ENCODE measurements at regions of chr4 and their contacts with region 1.

Region 1: GRCh38 chr4:111631215-111631999 is 513.8 kb upstream of the FAM241A start:
- DNase-seq: no peak
- H3K4me3 ChIP-seq: no peak overlapping the region
- H3K27me3 ChIP-seq: no peaks in the 10 kb centered on the region
- CTCF ChIP-seq: peak; percentile 56

Region 2: GRCh38 chr4:111136438-111136837 is 495.0 kb before region 1 on chr4:
- CTCF ChIA-PET with region 1: interaction called, 15 read pairs
- POLR2A ChIA-PET with region 1: no interaction called
- DNase-seq: no peak
- H3K4me3 ChIP-seq: no peak overlapping the region
- H3K27me3 ChIP-seq: no peaks in the 10 kb centered on the region
- CTCF ChIP-seq: peak; percentile 44

Region 3: GRCh38 chr4:111773858-111774257 is 142.5 kb after region 1 on chr4:
- CTCF ChIA-PET with region 1: no interaction called
- POLR2A ChIA-PET with region 1: no interaction called
- DNase-seq: no peak
- H3K4me3 ChIP-seq: no peak overlapping the region
- H3K27me3 ChIP-seq: no peaks in the 10 kb centered on the region
- CTCF ChIP-seq: no peak

Region 4: DNA sequence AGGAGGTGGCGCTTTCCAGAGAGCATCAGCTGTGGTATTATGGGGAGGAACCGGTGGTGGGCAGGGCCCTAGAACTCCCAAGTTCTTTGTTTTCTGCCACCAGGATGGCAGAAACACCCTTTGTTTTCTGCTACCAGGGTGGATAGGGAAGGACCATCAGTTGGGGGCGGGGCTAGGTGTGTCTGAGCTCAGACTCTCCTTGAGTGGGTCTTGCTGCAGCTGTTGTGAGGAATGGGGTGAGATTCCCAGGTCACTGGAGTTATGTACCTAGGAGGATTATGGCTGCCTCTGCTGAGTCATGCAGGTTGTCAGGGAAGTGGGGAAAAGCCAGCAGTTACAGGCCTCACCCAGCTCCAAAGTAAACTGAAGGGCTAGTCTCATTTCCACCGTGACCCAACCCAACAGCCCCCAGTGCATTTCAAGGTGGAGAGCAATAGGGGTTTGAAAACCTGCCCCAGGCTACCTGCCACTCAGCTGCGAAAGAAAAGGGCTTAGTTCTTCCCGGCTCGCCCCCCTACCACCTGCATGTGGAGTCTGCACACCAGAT is 346.1 kb after region 1 on chr4:
- CTCF ChIA-PET with region 1: no interaction called
- POLR2A ChIA-PET with region 1: no interaction called
- DNase-seq: no peak
- H3K4me3 ChIP-seq: no peak overlapping the region
- H3K27me3 ChIP-seq: no peaks in the 10 kb centered on the region
- CTCF ChIP-seq: no peak

Measured in BJ (cell line).